Esophagus muscularis mucosa (tissue), 4 donors: ENCODE measurements at regions of chr3 and their contacts with region 1.

Region 1: GRCh38 chr3:111859974-111860859 is 1.2 kb downstream of the PHLDB2 start:
- DNase-seq: peak; percentile 94
- H3K4me3 ChIP-seq: peak overlapping the region; percentile 83 to 96 (median 86)
- H3K27ac ChIP-seq: peak overlapping the region; percentile 98 to 99 (median 98)
- H3K4me1 ChIP-seq: peaks cover 39 to 59% (median 52%) of the 10 kb centered on the region in 4 donors
- H3K27me3 ChIP-seq: no peaks in the 10 kb centered on the region
- CTCF ChIP-seq: peak; percentile 52 to 74 (median 68)
- EP300 ChIP-seq: no peak
- POLR2A ChIP-seq: peak; percentile 38

Region 2: DNA sequence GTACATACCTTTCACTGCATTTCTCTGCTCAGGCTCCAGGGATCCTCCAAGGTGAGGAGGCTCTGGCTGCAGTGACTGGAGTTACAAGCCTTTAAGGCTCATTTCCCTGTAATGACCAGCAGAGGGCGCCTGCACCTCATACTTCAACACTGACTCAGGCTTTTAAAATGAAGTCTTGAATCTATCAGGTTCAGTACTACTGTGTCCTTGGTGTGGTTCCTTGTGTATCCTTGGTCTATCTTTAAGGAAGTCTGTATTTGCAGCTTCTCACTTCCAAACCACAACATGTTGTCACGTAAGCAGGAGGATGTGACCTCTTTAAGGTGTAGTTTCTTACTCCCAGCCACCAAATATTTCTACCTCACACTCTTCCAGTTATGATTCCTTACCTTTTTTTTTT is 142.6 kb before region 1 on chr3:
- intact Hi-C with region 1: loop called (anchors 2 kb)
- DNase-seq: peak; percentile 93
- H3K4me3 ChIP-seq: no peak overlapping the region
- H3K27ac ChIP-seq: peak overlapping the region in 1 of 4 donors; percentile 37
- H3K4me1 ChIP-seq: peaks cover 3 to 31% (median 25%) of the 10 kb centered on the region in 4 donors
- H3K27me3 ChIP-seq: no peaks in the 10 kb centered on the region
- CTCF ChIP-seq: peak; percentile 94 to 96 (median 96)
- EP300 ChIP-seq: no peak
- POLR2A ChIP-seq: no peak

Region 3: GRCh38 chr3:111737706-111738086 is 122.5 kb before region 1 on chr3:
- intact Hi-C with region 1: loop called (anchors 5 kb)
- DNase-seq: peak; percentile 92
- H3K4me3 ChIP-seq: no peak overlapping the region
- H3K27ac ChIP-seq: peak overlapping the region; percentile 64 to 85 (median 76)
- H3K4me1 ChIP-seq: peaks cover 38 to 48% (median 45%) of the 10 kb centered on the region in 4 donors
- H3K27me3 ChIP-seq: no peaks in the 10 kb centered on the region
- CTCF ChIP-seq: no peak
- EP300 ChIP-seq: no peak
- POLR2A ChIP-seq: no peak

Region 4: GRCh38 chr3:111904376-111905241 is 44.4 kb after region 1 on chr3:
- intact Hi-C with region 1: loop called (anchors 5 kb)
- DNase-seq: no peak
- H3K4me3 ChIP-seq: no peak overlapping the region
- H3K27ac ChIP-seq: peak overlapping the region; percentile 57 to 74 (median 70)
- H3K4me1 ChIP-seq: peaks cover 37 to 78% (median 57%) of the 10 kb centered on the region in 4 donors
- H3K27me3 ChIP-seq: no peaks in the 10 kb centered on the region
- CTCF ChIP-seq: peak in 1 of 3 experiments; percentile 38
- EP300 ChIP-seq: no peak
- POLR2A ChIP-seq: no peak

Region 5: DNA sequence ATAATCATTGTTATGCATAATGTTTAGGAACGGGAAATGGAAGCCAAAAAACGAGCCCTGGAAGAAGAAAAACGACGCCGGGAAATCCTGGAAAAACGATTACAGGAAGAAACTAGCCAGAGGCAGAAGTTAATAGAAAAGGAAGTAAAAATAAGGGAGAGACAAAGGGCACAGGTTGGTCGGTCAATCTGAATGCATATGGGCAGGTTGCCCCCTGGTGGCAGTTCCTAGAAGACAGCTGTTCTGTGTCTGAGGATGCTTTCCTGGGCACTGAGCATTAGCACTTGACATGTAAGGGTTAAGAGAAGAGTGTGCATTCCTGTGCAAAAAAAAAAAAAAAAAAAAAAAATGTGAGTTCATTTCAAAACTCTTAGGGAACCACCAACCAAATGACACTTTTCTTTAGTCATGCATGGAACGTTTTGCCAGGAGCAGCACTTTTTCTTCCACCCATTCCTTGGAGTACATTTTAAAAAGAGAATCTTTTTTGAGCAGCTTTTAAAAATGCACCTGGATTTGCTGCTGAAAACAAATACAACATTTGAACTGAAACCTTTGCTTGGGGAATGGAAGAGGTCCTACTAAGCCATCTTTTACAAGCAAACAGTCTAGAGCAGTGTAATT is 107.5 kb after region 1 on chr3:
- intact Hi-C with region 1: loop called (anchors 2 kb)
- DNase-seq: peak; percentile 97
- H3K4me3 ChIP-seq: no peak overlapping the region
- H3K27ac ChIP-seq: peak overlapping the region; percentile 38 to 67 (median 48)
- H3K4me1 ChIP-seq: peaks cover 18 to 28% (median 25%) of the 10 kb centered on the region in 4 donors
- H3K27me3 ChIP-seq: no peaks in the 10 kb centered on the region
- CTCF ChIP-seq: peak; percentile 85 to 94 (median 90)
- EP300 ChIP-seq: no peak
- POLR2A ChIP-seq: no peak